ENCODE measurements at regions of chr3 and their contacts with region 1.

Region 1: GRCh38 chr3:151327571-151328198 is 1.7 kb downstream of the P2RY13 start:
- DNase-seq: peak in 2 of 5 donors; percentile 4 to 11
- H3K4me3 ChIP-seq: no peak overlapping the region
- H3K4me3 Mint-ChIP-seq: no peak overlapping the region
- H3K27ac ChIP-seq: no peak overlapping the region
- H3K27ac Mint-ChIP-seq: no peak overlapping the region
- H3K4me1 ChIP-seq: no peaks in the 10 kb centered on the region
- H3K4me1 Mint-ChIP-seq: peaks cover 2 to 8% (median 4%) of the 10 kb centered on the region in 4 donors
- H3K27me3 ChIP-seq: no peaks in the 10 kb centered on the region
- H3K27me3 Mint-ChIP-seq: peaks cover 7 to 8% of the 10 kb centered on the region in 2 donors

Region 2: DNA sequence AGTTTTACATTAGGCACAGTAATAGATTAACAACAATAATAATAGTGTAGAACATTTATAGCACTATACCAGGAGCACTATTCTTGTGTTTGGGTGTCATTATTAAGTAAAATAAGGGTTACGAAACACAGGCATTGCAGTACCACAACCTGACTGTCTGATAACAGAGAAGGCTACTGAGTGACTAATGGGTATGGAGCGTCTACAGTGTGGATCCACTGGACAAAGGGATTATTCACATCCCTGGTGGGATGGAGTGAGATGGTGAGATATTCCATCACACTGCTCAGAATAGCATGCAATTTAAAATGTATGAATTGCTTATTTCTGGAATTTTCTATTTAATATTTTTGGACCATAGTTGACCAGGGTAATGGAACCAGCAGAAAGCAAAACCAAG is 440.7 kb before region 1 on chr3:
- CTCF ChIA-PET with region 1: no interaction called
- POLR2A ChIA-PET with region 1: no interaction called
- intact Hi-C with region 1: no loop called
- DNase-seq: no peak
- H3K4me3 ChIP-seq: no peak overlapping the region
- H3K4me3 Mint-ChIP-seq: no peak overlapping the region
- H3K27ac ChIP-seq: no peak overlapping the region
- H3K27ac Mint-ChIP-seq: no peak overlapping the region
- H3K4me1 ChIP-seq: no peaks in the 10 kb centered on the region
- H3K4me1 Mint-ChIP-seq: no peaks in the 10 kb centered on the region
- H3K27me3 ChIP-seq: no peaks in the 10 kb centered on the region
- H3K27me3 Mint-ChIP-seq: peaks cover 18 to 21% of the 10 kb centered on the region in 2 donors

Region 3: GRCh38 chr3:151290673-151291072 is 37.0 kb before region 1 on chr3:
- CTCF ChIA-PET with region 1: no interaction called
- POLR2A ChIA-PET with region 1: no interaction called
- intact Hi-C with region 1: loop called (anchors 5 kb)
- DNase-seq: no peak
- H3K4me3 ChIP-seq: no peak overlapping the region
- H3K4me3 Mint-ChIP-seq: no peak overlapping the region
- H3K27ac ChIP-seq: no peak overlapping the region
- H3K27ac Mint-ChIP-seq: no peak overlapping the region
- H3K4me1 ChIP-seq: no peaks in the 10 kb centered on the region
- H3K4me1 Mint-ChIP-seq: no peaks in the 10 kb centered on the region
- H3K27me3 ChIP-seq: no peaks in the 10 kb centered on the region
- H3K27me3 Mint-ChIP-seq: peaks cover 2 to 9% of the 10 kb centered on the region in 2 donors

Region 4: DNA sequence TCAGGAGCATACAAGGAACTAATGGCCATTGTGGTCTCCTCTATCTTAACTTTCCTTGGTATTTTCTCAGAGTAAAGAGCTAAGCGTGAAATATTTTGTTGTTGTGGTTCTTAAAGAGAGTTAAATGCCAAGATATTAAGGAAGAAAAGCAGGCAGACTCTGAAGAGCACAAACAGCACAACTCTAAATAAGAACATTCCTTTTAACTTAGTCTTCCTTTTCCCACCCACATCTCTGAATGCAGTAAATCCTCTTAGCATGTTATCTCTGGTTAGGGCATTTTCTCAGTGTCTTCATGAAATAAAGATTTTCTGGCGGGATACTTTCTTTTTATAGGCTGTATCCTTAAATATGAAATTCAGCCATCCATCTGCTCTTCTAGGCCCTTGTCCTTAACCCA is 12.5 kb before region 1 on chr3:
- CTCF ChIA-PET with region 1: interaction called, 13 read pairs
- POLR2A ChIA-PET with region 1: no interaction called
- intact Hi-C with region 1: no loop called
- DNase-seq: no peak
- H3K4me3 ChIP-seq: no peak overlapping the region
- H3K4me3 Mint-ChIP-seq: no peak overlapping the region
- H3K27ac ChIP-seq: no peak overlapping the region
- H3K27ac Mint-ChIP-seq: no peak overlapping the region
- H3K4me1 ChIP-seq: no peaks in the 10 kb centered on the region
- H3K4me1 Mint-ChIP-seq: peaks cover 0 to 5% (median 0%) of the 10 kb centered on the region in 4 donors
- H3K27me3 ChIP-seq: no peaks in the 10 kb centered on the region
- H3K27me3 Mint-ChIP-seq: peaks cover 0 to 4% of the 10 kb centered on the region in 2 donors